WTC11 (cell line): ENCODE measurements at regions of chr1 and their contacts with region 1.

Region 1: GRCh38 chr1:27136998-27137542 is 17.9 kb downstream of the SLC9A1 start:
- DNase-seq: no peak
- ATAC-seq: peak; percentile 7; the same call in 1 of the 2 replicates
- H3K4me3 Mint-ChIP-seq: no peak overlapping the region
- H3K27ac Mint-ChIP-seq: peak overlapping the region; percentile 42; the same call in 1 of the 2 replicates
- H3K4me1 Mint-ChIP-seq: peaks cover 39% of the 10 kb centered on the region
- H3K27me3 Mint-ChIP-seq: no peaks in the 10 kb centered on the region
- CTCF ChIP-seq: no peak

Region 2: GRCh38 chr1:27102707-27103491 is 34.2 kb before region 1 on chr1:
- CTCF ChIA-PET with region 1: interaction called, 10 read pairs
- POLR2A ChIA-PET with region 1: no interaction called
- DNase-seq: peak; percentile 95
- ATAC-seq: peak; percentile 84
- H3K4me3 Mint-ChIP-seq: no peak overlapping the region
- H3K27ac Mint-ChIP-seq: no peak overlapping the region
- H3K4me1 Mint-ChIP-seq: peaks cover 29% of the 10 kb centered on the region
- H3K27me3 Mint-ChIP-seq: no peaks in the 10 kb centered on the region; the same call in 1 of the 2 replicates
- CTCF ChIP-seq: peak; percentile 99

Region 3: DNA sequence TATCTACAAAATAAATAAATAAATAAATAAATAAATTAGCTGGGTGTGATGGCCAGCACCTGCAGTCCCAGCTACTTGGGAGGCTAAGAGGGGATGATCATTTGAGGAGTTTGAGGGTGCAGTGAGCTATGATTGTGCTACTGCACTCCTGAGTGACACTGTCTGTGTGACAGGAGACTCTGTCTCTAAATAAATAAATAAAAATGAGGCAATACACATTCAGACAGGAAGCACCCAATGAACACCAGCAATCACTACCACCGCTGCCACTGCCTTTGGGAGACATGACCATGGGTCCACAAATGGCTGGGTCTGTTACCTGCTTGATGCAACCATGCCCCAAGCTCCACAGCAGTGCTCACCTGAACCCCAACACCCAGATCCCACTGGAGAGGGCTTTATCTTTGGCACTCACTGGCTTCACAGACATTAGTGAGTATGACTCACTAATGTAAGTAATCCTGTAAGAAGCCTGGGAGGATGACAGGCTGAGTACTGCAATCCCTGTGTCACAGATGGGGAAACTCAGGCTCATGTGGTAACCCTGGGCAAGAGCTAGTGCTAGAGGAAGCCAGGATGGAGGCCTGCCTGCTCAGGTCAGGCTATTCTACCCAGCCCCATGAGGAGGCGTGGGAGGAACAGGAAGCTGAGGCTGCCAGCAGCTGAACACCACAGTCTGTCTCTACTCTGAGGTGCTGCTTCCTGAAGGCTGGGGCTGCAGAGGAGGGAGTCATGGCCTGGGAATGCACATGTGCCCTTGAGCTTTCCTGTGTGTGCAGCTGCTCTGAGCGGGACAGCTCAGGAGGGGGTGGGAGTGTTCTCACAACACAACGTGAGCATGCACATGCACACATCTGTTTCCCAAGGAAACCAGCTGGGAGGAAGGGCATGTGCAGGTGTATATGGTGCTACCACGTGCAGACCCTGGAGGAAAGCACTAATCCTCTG is 25.2 kb before region 1 on chr1:
- CTCF ChIA-PET with region 1: interaction called, 10 read pairs
- POLR2A ChIA-PET with region 1: no interaction called
- DNase-seq: no peak
- ATAC-seq: peak; percentile 63
- H3K4me3 Mint-ChIP-seq: no peak overlapping the region
- H3K27ac Mint-ChIP-seq: peak overlapping the region; percentile 74
- H3K4me1 Mint-ChIP-seq: peaks cover 7% of the 10 kb centered on the region
- H3K27me3 Mint-ChIP-seq: no peaks in the 10 kb centered on the region
- CTCF ChIP-seq: no peak

Region 4: GRCh38 chr1:27154991-27155781 is 18.1 kb after region 1 on chr1 and contains the start of gene SLC9A1:
- CTCF ChIA-PET with region 1: interaction called, 18 read pairs
- POLR2A ChIA-PET with region 1: interaction called, 25 read pairs
- DNase-seq: peak; percentile 93
- ATAC-seq: peak; percentile 97
- H3K4me3 Mint-ChIP-seq: peak within 1 kb of the TSS; percentile 92
- H3K27ac Mint-ChIP-seq: peak within 1 kb of the TSS; percentile 78
- H3K4me1 Mint-ChIP-seq: peaks cover 26% of the 10 kb centered on the region
- H3K27me3 Mint-ChIP-seq: no peaks in the 10 kb centered on the region
- CTCF ChIP-seq: no peak
- total RNA-seq, gene SLC9A1: 22.0 to 25.1 TPM (median 22.5 TPM) in 3 replicates

Region 5: GRCh38 chr1:27192039-27192529 is 55.0 kb after region 1 on chr1:
- CTCF ChIA-PET with region 1: interaction called, 15 read pairs
- POLR2A ChIA-PET with region 1: interaction called, 3 read pairs
- DNase-seq: no peak
- ATAC-seq: no peak
- H3K4me3 Mint-ChIP-seq: no peak overlapping the region
- H3K27ac Mint-ChIP-seq: no peak overlapping the region
- H3K4me1 Mint-ChIP-seq: no peaks in the 10 kb centered on the region
- H3K27me3 Mint-ChIP-seq: peaks cover 2% of the 10 kb centered on the region; the same call in 1 of the 2 replicates
- CTCF ChIP-seq: no peak

Region 6: GRCh38 chr1:27284425-27285273 is 147.6 kb after region 1 on chr1:
- CTCF ChIA-PET with region 1: interaction called, 10 read pairs
- POLR2A ChIA-PET with region 1: no interaction called
- DNase-seq: peak; percentile 90
- ATAC-seq: peak; percentile 88
- H3K4me3 Mint-ChIP-seq: no peak overlapping the region
- H3K27ac Mint-ChIP-seq: peak overlapping the region; percentile 17
- H3K4me1 Mint-ChIP-seq: no peaks in the 10 kb centered on the region; the same call in 1 of the 2 replicates
- H3K27me3 Mint-ChIP-seq: no peaks in the 10 kb centered on the region
- CTCF ChIP-seq: peak; percentile 91